Caco-2 (cell line): ENCODE measurements at regions of chr1 and their contacts with region 1.

Region 1: GRCh38 chr1:181142096-181142958 is 53.8 kb downstream of the IER5 start:
- DNase-seq: peak; percentile 87 to 92
- H3K4me3 ChIP-seq: peak overlapping the region; percentile 15; the same call in 1 of the 2 replicates
- H3K4me3 Mint-ChIP-seq: peak overlapping the region; percentile 26
- H3K27ac Mint-ChIP-seq: no peak overlapping the region
- H3K4me1 ChIP-seq: no peaks in the 10 kb centered on the region
- H3K4me1 Mint-ChIP-seq: peaks cover 16% of the 10 kb centered on the region
- H3K27me3 ChIP-seq: no peaks in the 10 kb centered on the region
- H3K27me3 Mint-ChIP-seq: peaks cover 3% of the 10 kb centered on the region
- CTCF ChIP-seq: peak; percentile 97 to 98

Region 2: DNA sequence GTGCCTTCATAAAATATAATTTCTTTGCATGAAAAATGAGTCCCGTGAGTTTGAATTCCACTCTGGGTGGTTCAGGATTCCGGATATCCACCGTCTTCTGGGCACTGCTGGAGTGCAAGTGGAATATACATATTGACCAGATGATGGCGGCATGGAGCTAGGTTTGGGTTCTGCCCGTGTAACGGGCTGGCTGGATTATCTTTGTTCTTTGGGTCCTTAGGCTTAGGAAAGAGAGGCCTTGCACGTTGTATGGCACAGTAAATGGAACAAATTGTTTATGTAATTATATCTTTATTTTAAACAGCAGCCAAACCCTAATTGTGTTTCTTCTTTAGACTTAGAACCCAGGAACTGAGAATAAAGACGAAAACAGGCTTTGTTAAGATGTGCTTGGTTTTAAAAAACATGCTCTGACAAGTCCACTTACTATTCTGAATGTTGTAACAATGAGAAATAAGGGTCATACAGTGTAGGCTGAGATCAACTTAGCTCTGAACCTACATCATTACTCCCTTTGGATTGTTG is 626.4 kb before region 1 on chr1:
- CTCF ChIA-PET with region 1: interaction called, 6 read pairs
- POLR2A ChIA-PET with region 1: no interaction called
- intact Hi-C with region 1: loop called (anchors 10 kb)
- DNase-seq: peak; percentile 68 to 80
- H3K4me3 ChIP-seq: no peak overlapping the region
- H3K4me3 Mint-ChIP-seq: no peak overlapping the region
- H3K27ac Mint-ChIP-seq: no peak overlapping the region
- H3K4me1 ChIP-seq: 0 out of 2 replicates have a peak, but pooled peaks cover 7% of the 10 kb centered on the region
- H3K4me1 Mint-ChIP-seq: peaks cover 16% of the 10 kb centered on the region
- H3K27me3 ChIP-seq: no peaks in the 10 kb centered on the region
- H3K27me3 Mint-ChIP-seq: no peaks in the 10 kb centered on the region
- CTCF ChIP-seq: peak; percentile 80 to 82

Region 3: GRCh38 chr1:180945551-180945950 is 196.8 kb before region 1 on chr1:
- CTCF ChIA-PET with region 1: no interaction called
- POLR2A ChIA-PET with region 1: no interaction called
- intact Hi-C with region 1: loop called (anchors 2 kb)
- DNase-seq: no peak
- H3K4me3 ChIP-seq: no peak overlapping the region
- H3K4me3 Mint-ChIP-seq: no peak overlapping the region
- H3K27ac Mint-ChIP-seq: no peak overlapping the region
- H3K4me1 ChIP-seq: no peaks in the 10 kb centered on the region
- H3K4me1 Mint-ChIP-seq: no peaks in the 10 kb centered on the region
- H3K27me3 ChIP-seq: no peaks in the 10 kb centered on the region
- H3K27me3 Mint-ChIP-seq: no peaks in the 10 kb centered on the region
- CTCF ChIP-seq: no peak

Region 4: GRCh38 chr1:181038399-181038873 is 103.9 kb before region 1 on chr1:
- CTCF ChIA-PET with region 1: interaction called, 9 read pairs
- POLR2A ChIA-PET with region 1: no interaction called
- intact Hi-C with region 1: loop called (anchors 1 kb)
- DNase-seq: peak; percentile 79 to 85
- H3K4me3 ChIP-seq: no peak overlapping the region
- H3K4me3 Mint-ChIP-seq: no peak overlapping the region
- H3K27ac Mint-ChIP-seq: no peak overlapping the region
- H3K4me1 ChIP-seq: peaks cover 9% of the 10 kb centered on the region
- H3K4me1 Mint-ChIP-seq: peaks cover 13% of the 10 kb centered on the region
- H3K27me3 ChIP-seq: no peaks in the 10 kb centered on the region
- H3K27me3 Mint-ChIP-seq: no peaks in the 10 kb centered on the region
- CTCF ChIP-seq: peak; percentile 67 to 79

Region 5: GRCh38 chr1:181105134-181106021 is 36.9 kb before region 1 on chr1:
- CTCF ChIA-PET with region 1: interaction called, 9 read pairs
- POLR2A ChIA-PET with region 1: interaction called, 4 read pairs
- intact Hi-C with region 1: loop called (anchors 1 kb)
- DNase-seq: peak; percentile 93 to 94
- H3K4me3 ChIP-seq: peak overlapping the region; percentile 83
- H3K4me3 Mint-ChIP-seq: peak overlapping the region; percentile 76
- H3K27ac Mint-ChIP-seq: peak overlapping the region; percentile 86
- H3K4me1 ChIP-seq: peaks cover 51% of the 10 kb centered on the region
- H3K4me1 Mint-ChIP-seq: peaks cover 61% of the 10 kb centered on the region
- H3K27me3 ChIP-seq: no peaks in the 10 kb centered on the region
- H3K27me3 Mint-ChIP-seq: no peaks in the 10 kb centered on the region
- CTCF ChIP-seq: no peak